Breast epithelium (tissue), 4 donors: ENCODE measurements at regions of chr12 and their contacts with region 1.

Region 1: DNA sequence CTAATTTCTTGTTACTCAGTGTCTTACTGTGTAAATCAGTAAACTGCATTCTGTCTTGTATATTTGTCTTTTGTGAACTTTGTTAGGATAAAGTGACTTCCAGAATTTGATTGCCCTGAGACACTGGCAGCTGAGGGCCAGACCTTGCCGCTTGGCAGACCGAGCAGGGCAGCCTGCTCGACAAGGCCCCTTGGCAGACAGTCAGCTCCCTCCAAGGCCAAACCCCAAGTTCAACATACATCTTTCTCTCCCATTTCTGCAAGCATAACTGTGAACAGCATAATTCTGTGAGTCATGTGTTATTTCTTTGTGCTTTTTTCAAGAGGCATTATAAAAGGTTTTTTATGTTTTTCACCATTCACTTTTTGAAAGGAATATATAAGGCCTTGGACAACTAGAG is 39.2 kb upstream of the BMAL2 start:
- DNase-seq: peak in 1 of 2 donors; percentile 44
- H3K4me3 ChIP-seq: no peak overlapping the region
- H3K27ac ChIP-seq: peak overlapping the region; percentile 23 to 39
- H3K4me1 ChIP-seq: peaks cover 0 to 6% of the 10 kb centered on the region in 2 donors
- H3K27me3 ChIP-seq: no peaks in the 10 kb centered on the region
- CTCF ChIP-seq: no peak
- POLR2A ChIP-seq: no peak

Region 2: DNA sequence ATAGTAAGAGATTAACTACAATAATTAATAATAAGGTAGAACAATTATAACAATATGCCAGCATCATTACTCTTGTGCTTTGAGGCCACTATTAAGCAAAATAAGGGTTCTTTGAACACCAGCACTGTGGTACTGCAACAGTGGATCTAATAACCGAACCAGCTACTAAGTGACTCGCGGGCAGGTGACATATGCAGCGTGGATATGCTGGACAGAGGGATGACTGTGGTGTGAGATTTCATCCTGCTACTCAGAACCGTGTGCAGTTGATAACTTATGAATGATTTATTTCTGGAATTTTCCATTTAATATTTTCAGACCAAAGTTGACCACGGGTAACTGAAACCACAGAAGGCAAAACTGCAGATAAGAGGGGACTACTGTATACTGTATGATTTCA is 73.6 kb after region 1 on chr12:
- intact Hi-C with region 1: no loop called
- DNase-seq: no peak
- H3K4me3 ChIP-seq: no peak overlapping the region
- H3K27ac ChIP-seq: no peak overlapping the region
- H3K4me1 ChIP-seq: no peaks in the 10 kb centered on the region
- H3K27me3 ChIP-seq: no peaks in the 10 kb centered on the region
- CTCF ChIP-seq: no peak
- POLR2A ChIP-seq: no peak

Region 3: DNA sequence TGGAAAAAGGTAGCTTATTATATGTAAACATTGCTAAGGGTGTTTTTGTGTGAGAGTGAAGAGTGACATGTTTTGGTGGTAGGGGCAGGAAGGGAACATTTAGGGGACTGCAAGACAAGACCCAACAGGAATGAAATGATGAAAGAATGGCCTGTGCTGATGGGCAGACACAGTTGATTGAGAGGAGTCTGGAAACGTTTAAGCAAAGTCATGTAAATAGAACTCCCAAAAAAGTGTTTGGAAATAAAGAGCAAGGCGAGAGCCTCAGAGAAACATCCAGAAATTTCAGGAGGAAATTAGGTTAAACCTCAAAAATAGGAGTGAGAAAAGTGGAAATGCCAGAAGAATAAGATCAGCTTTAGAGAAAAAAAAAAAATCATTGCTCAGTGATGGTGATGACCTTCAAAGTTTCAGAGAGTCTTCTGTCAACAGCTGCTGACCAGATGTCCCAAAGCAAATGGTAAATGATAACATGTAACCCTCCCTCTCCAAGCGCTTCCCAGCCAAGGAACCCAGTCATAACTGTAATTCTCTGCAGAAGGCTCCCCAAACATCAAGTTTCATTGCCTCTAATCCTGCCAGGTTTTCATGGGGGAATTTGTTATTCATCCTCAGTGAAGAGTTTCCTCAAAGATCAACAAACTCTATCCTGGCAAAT is 1632.4 kb after region 1 on chr12:
- intact Hi-C with region 1: loop called (anchors 10 kb)
- DNase-seq: no peak
- H3K4me3 ChIP-seq: no peak overlapping the region
- H3K27ac ChIP-seq: peak overlapping the region in 1 of 2 donors; percentile 38
- H3K4me1 ChIP-seq: no peaks in the 10 kb centered on the region
- H3K27me3 ChIP-seq: no peaks in the 10 kb centered on the region
- CTCF ChIP-seq: no peak
- POLR2A ChIP-seq: no peak